B cell (primary cell): ENCODE measurements at regions of chr22 and their contacts with region 1.

Region 1: DNA sequence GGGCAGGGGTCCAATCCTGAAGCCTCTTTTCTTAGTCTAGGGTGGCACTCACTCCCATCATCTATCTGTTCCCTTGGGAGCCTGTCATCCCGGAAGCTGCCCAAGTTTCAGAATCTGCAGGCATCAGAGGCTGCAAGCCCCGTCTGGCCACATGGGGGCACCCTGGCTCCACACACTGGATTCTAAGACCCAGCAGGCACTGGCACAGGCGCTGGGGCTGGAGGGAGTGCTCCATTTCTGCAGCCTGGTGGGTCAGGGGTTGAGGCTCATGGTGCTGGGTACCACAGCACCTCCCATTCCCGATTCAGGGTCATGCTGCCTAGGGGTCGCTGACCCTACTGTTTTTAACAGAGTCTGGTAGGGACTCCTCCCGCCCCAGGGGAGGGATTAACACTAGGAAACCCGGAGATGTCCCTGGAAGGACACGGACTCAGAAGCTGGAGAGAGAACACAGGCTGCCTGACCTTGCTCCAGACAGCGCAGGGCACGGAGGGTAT is 243.9 kb upstream of the SYN3 start:
- DNase-seq: peak; percentile 83
- ATAC-seq: peak; percentile 60
- H3K4me3 ChIP-seq: peak overlapping the region in 1 of 5 experiments; percentile 7
- H3K4me3 Mint-ChIP-seq: peak overlapping the region; percentile 51
- H3K27ac ChIP-seq: peak overlapping the region in 1 of 2 donors; percentile 16
- H3K27ac Mint-ChIP-seq: peak overlapping the region; percentile 88
- H3K4me1 ChIP-seq: peaks cover 64 to 76% of the 10 kb centered on the region in 2 donors
- H3K4me1 Mint-ChIP-seq: peaks cover 65% of the 10 kb centered on the region
- H3K27me3 ChIP-seq: no peaks in the 10 kb centered on the region
- H3K27me3 Mint-ChIP-seq: no peaks in the 10 kb centered on the region
- CTCF ChIP-seq: peak; percentile 98

Region 2: GRCh38 chr22:32985899-32986765 is 316.0 kb before region 1 on chr22:
- CTCF ChIA-PET with region 1: no interaction called
- POLR2A ChIA-PET with region 1: no interaction called
- intact Hi-C with region 1: no loop called
- DNase-seq: peak; percentile 50
- ATAC-seq: peak; percentile 39
- H3K4me3 ChIP-seq: no peak overlapping the region
- H3K4me3 Mint-ChIP-seq: no peak overlapping the region
- H3K27ac ChIP-seq: no peak overlapping the region
- H3K27ac Mint-ChIP-seq: no peak overlapping the region
- H3K4me1 ChIP-seq: no peaks in the 10 kb centered on the region
- H3K4me1 Mint-ChIP-seq: peaks cover 3% of the 10 kb centered on the region
- H3K27me3 ChIP-seq: peaks cover 0 to 4% (median 0%) of the 10 kb centered on the region in 4 experiments
- H3K27me3 Mint-ChIP-seq: peaks cover 16% of the 10 kb centered on the region
- CTCF ChIP-seq: peak; percentile 64

Region 3: DNA sequence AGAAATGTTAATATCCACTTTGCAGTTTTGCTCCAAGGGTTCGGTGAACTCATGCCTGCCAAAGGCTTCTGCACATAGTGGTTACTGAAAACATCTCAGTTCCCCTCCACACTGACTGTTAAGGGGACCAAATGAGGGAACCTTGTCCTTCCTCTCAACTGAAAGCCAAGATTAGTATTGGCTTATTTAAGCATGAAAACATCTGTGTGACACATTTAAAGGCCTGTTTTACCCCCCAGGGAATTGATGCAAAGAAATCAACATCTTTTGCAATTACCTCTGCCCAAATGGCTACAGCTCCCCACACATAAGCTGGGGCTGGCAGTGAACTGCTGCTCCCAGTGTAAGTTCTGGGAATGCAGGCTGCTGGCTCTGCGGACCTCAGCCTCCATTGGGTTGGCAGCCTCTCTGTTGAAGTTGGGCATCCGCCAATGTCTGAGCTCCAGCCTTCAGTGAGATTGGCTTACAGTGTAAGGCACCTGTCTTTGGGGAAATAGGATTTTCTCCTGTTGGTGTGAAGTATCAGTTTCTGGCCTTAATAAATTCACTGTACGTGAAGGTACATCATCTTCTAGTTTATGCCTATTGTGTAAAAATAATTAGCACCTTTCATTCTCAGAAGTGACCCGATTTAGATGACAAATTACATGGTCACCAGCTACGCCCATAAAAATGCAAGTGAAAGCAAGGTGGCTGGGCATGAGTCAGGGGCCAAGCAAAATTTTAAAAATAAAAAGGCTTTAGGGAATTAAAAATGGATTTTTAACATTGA is 30.5 kb before region 1 on chr22:
- CTCF ChIA-PET with region 1: interaction called, 124 read pairs
- POLR2A ChIA-PET with region 1: interaction called, 6 read pairs
- intact Hi-C with region 1: loop called (anchors 2 kb)
- DNase-seq: peak; percentile 86
- ATAC-seq: peak; percentile 89
- H3K4me3 ChIP-seq: peak overlapping the region in 1 of 5 experiments; percentile 28
- H3K4me3 Mint-ChIP-seq: peak overlapping the region; percentile 74
- H3K27ac ChIP-seq: peak overlapping the region; percentile 84 to 91
- H3K27ac Mint-ChIP-seq: peak overlapping the region; percentile 88
- H3K4me1 ChIP-seq: peaks cover 74 to 79% of the 10 kb centered on the region in 2 donors
- H3K4me1 Mint-ChIP-seq: peaks cover 75% of the 10 kb centered on the region
- H3K27me3 ChIP-seq: no peaks in the 10 kb centered on the region
- H3K27me3 Mint-ChIP-seq: no peaks in the 10 kb centered on the region
- CTCF ChIP-seq: no peak

Region 4: DNA sequence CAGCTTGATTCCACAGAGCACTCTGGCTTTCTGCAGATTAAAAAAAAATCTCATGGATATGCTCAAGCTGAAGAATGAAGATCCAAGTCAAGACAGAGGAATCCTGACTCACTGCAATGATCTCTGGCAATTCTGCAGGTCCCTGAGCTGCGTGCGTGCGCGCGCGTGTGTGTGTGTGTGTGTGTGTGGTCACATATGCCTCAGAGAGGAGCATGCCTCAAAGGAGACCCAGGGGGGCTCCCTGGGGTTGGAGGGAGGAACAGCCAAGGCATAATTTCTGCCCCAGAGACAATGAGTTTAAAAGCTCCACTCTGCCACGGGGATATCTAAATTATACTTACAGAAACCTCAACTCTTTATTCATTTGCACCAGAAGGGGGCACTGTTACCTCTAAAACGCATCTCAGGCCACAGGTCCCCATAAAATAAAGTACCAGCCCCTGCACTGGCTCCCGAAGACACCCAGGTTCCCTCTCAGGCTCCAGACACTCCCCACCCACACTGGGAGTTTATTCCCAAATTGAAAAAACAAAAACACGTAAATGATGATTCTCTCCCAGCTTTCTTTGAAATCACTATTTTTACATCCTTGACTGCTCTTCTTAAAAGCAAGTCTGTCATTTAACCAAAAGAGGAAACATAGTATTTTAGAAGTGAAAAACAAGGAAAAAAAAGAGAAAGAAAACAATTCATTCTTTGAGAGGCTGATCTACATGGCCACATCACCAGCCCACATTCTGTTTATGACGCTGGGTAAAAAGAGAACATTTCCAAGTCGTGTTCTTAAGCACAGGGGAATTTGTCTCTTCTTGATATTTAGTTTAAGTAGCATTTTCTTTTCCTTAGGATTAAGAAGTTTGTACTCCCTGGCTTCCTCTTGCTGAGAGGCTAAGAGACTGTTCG is 217.2 kb after region 1 on chr22:
- CTCF ChIA-PET with region 1: interaction called, 109 read pairs
- POLR2A ChIA-PET with region 1: interaction called, 6 read pairs
- intact Hi-C with region 1: loop called (anchors 1 kb)
- DNase-seq: peak; percentile 88
- ATAC-seq: peak; percentile 53
- H3K4me3 ChIP-seq: peak overlapping the region in 3 of 5 experiments; percentile 6 to 48 (median 7)
- H3K4me3 Mint-ChIP-seq: peak overlapping the region; percentile 75
- H3K27ac ChIP-seq: peak overlapping the region; percentile 38 to 75
- H3K27ac Mint-ChIP-seq: peak overlapping the region; percentile 87
- H3K4me1 ChIP-seq: peaks cover 52 to 55% of the 10 kb centered on the region in 2 donors
- H3K4me1 Mint-ChIP-seq: peaks cover 53% of the 10 kb centered on the region
- H3K27me3 ChIP-seq: no peaks in the 10 kb centered on the region
- H3K27me3 Mint-ChIP-seq: no peaks in the 10 kb centered on the region
- CTCF ChIP-seq: peak; percentile 79

Region 5: GRCh38 chr22:33579448-33580093 is 277.5 kb after region 1 on chr22:
- CTCF ChIA-PET with region 1: interaction called, 112 read pairs
- POLR2A ChIA-PET with region 1: interaction called, 3 read pairs
- intact Hi-C with region 1: loop called (anchors 1 kb)
- DNase-seq: peak; percentile 79
- ATAC-seq: peak; percentile 69
- H3K4me3 ChIP-seq: no peak overlapping the region
- H3K4me3 Mint-ChIP-seq: peak overlapping the region; percentile 61
- H3K27ac ChIP-seq: peak overlapping the region; percentile 48 to 72
- H3K27ac Mint-ChIP-seq: peak overlapping the region; percentile 86
- H3K4me1 ChIP-seq: peaks cover 46 to 52% of the 10 kb centered on the region in 2 donors
- H3K4me1 Mint-ChIP-seq: peaks cover 51% of the 10 kb centered on the region
- H3K27me3 ChIP-seq: no peaks in the 10 kb centered on the region
- H3K27me3 Mint-ChIP-seq: no peaks in the 10 kb centered on the region
- CTCF ChIP-seq: peak; percentile 98

Region 6: GRCh38 chr22:34105461-34106062 is 803.5 kb after region 1 on chr22:
- CTCF ChIA-PET with region 1: interaction called, 94 read pairs
- POLR2A ChIA-PET with region 1: no interaction called
- intact Hi-C with region 1: no loop called
- DNase-seq: peak; percentile 39
- ATAC-seq: peak; percentile 43
- H3K4me3 ChIP-seq: no peak overlapping the region
- H3K4me3 Mint-ChIP-seq: no peak overlapping the region
- H3K27ac ChIP-seq: no peak overlapping the region
- H3K27ac Mint-ChIP-seq: no peak overlapping the region
- H3K4me1 ChIP-seq: no peaks in the 10 kb centered on the region
- H3K4me1 Mint-ChIP-seq: peaks cover 2% of the 10 kb centered on the region
- H3K27me3 ChIP-seq: peaks cover 0 to 5% (median 1%) of the 10 kb centered on the region in 4 experiments
- H3K27me3 Mint-ChIP-seq: peaks cover 25% of the 10 kb centered on the region
- CTCF ChIP-seq: peak; percentile 66